A673 (cell line): ENCODE measurements at regions of chr9 and their contacts with region 1.

Region 1: GRCh38 chr9:17906176-17906840 is 327.4 kb downstream of the SH3GL2 start:
- DNase-seq: no peak
- H3K4me3 ChIP-seq: no peak overlapping the region
- H3K27ac ChIP-seq: no peak overlapping the region
- H3K4me1 ChIP-seq: no peaks in the 10 kb centered on the region
- H3K27me3 ChIP-seq: peaks cover 28% of the 10 kb centered on the region
- CTCF ChIP-seq: no peak

Region 2: DNA sequence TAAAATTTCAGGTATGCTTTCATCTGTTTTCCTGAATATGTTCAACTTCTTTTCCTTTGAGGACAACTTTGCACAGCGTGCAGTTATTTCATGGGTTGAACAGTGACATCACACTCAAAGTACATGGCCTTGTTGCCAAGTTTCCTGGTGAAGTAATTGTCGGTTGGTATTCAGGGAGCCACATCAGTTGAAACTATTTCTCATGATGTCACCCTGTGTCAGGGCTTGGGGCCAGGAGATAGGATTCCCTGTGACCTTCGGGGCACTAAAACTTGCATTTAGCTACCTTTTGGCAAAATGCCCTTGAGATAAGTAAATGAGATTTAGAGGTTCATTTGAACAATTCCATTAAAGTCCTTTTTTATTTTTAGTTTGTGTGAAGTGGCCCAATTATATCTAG is 56.4 kb after region 1 on chr9:
- CTCF ChIA-PET with region 1: no interaction called
- POLR2A ChIA-PET with region 1: no interaction called
- intact Hi-C with region 1: loop called (anchors 10 kb)
- DNase-seq: no peak
- H3K4me3 ChIP-seq: no peak overlapping the region
- H3K27ac ChIP-seq: no peak overlapping the region
- H3K4me1 ChIP-seq: no peaks in the 10 kb centered on the region
- H3K27me3 ChIP-seq: no peaks in the 10 kb centered on the region
- CTCF ChIP-seq: no peak

Region 3: DNA sequence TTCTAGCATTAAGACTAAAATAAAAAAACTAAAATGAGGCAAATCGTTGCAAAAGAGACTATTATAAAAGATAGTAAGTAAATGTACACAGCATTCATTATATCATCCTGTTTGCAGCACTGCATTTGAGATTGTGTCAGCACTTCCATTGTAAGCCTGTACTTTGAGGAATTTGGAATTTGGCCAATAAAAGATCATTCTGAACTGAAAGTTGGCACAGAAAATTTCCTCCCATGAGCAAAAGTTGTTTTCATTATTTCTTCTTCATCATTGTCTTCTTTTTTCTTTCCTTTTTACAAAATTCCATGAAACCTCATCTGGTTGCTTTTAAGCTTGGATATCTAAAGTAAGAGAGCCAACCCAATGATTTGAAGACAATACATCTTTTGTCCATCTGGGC is 368.4 kb after region 1 on chr9:
- CTCF ChIA-PET with region 1: no interaction called
- POLR2A ChIA-PET with region 1: no interaction called
- intact Hi-C with region 1: no loop called
- DNase-seq: peak; percentile 1
- H3K4me3 ChIP-seq: no peak overlapping the region
- H3K27ac ChIP-seq: no peak overlapping the region
- H3K4me1 ChIP-seq: no peaks in the 10 kb centered on the region
- H3K27me3 ChIP-seq: no peaks in the 10 kb centered on the region
- CTCF ChIP-seq: no peak